ENCODE measurements at regions of chr12 and their contacts with region 1.

Region 1: GRCh38 chr12:70242695-70243509 is at the start of gene CNOT2:
- DNase-seq: peak; percentile 70 to 94
- H3K4me3 ChIP-seq: peak within 1 kb of the TSS; percentile 89 to 92
- H3K27ac ChIP-seq: peak within 1 kb of the TSS; percentile 97 to 98
- H3K4me1 ChIP-seq: peaks cover 5 to 29% of the 10 kb centered on the region in 2 donors
- H3K27me3 ChIP-seq: no peaks in the 10 kb centered on the region
- CTCF ChIP-seq: no peak
- total RNA-seq, gene CNOT2: 71.7 TPM

Region 2: GRCh38 chr12:69359531-69360347 is 883.2 kb before region 1 on chr12 and contains the start of gene YEATS4:
- intact Hi-C with region 1: loop called (anchors 5 kb)
- DNase-seq: peak; percentile 55 to 90
- H3K4me3 ChIP-seq: peak within 1 kb of the TSS; percentile 65 to 88
- H3K27ac ChIP-seq: peak within 1 kb of the TSS; percentile 95 to 97
- H3K4me1 ChIP-seq: no peaks in the 10 kb centered on the region
- H3K27me3 ChIP-seq: no peaks in the 10 kb centered on the region
- CTCF ChIP-seq: no peak
- total RNA-seq, gene YEATS4: 4.3 TPM

Region 3: GRCh38 chr12:69994724-69995173 is 248.2 kb before region 1 on chr12:
- intact Hi-C with region 1: loop called (anchors 5 kb)
- DNase-seq: no peak
- H3K4me3 ChIP-seq: no peak overlapping the region
- H3K27ac ChIP-seq: no peak overlapping the region
- H3K4me1 ChIP-seq: peaks cover 0 to 5% of the 10 kb centered on the region in 2 donors
- H3K27me3 ChIP-seq: no peaks in the 10 kb centered on the region
- CTCF ChIP-seq: no peak

Region 4: DNA sequence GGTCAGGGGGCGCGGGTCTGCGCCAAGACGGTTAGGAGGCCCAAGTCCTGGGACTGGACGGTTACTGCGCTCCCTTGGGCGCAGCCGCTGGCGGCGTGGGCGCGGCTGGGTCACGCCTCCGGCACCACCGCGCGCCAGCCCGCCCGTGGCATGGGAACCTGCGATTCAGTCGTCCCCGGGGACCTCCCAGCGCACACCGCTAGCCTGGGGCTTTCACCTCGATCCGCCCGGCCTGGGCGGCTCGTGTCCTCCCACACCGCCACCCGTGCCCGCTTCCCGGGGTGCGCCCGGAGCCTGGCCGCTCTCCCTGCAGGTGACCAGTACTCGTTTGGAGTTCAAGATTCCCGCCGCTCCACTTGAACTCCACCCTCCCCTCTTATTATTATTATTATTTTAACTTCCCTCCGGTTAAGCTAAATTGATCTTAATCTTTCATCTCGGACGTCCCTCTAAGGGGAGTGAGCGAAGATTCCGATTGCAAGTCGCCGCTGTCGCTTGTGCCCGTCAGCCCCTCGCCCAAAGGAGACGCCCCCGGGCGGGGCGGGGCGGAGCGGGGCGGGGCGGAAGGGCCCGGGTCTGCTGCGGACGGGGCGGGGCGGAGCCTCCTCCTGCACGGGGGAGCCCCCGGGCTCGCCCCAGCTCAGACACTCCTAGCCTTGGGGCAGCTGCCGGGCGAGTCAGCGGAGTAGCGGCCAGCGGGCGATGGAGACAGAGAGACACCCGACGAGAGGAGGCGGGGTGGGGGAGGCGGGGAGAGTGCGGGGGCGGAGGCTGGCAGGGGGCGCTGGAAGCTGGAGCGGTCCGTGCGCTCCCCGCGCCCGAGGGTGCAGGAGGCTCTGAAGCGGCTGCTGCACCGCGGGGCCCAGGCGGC is 123.0 kb after region 1 on chr12 and contains the start of gene KCNMB4:
- intact Hi-C with region 1: loop called (anchors 5 kb)
- DNase-seq: peak in 1 of 2 donors; percentile 75
- H3K4me3 ChIP-seq: peak within 1 kb of the TSS; percentile 76 to 91
- H3K27ac ChIP-seq: peak within 1 kb of the TSS; percentile 27 to 33
- H3K4me1 ChIP-seq: peaks cover 3 to 6% of the 10 kb centered on the region in 2 donors
- H3K27me3 ChIP-seq: no peaks in the 10 kb centered on the region
- CTCF ChIP-seq: no peak
- total RNA-seq, gene KCNMB4: 3.4 TPM

Region 5: DNA sequence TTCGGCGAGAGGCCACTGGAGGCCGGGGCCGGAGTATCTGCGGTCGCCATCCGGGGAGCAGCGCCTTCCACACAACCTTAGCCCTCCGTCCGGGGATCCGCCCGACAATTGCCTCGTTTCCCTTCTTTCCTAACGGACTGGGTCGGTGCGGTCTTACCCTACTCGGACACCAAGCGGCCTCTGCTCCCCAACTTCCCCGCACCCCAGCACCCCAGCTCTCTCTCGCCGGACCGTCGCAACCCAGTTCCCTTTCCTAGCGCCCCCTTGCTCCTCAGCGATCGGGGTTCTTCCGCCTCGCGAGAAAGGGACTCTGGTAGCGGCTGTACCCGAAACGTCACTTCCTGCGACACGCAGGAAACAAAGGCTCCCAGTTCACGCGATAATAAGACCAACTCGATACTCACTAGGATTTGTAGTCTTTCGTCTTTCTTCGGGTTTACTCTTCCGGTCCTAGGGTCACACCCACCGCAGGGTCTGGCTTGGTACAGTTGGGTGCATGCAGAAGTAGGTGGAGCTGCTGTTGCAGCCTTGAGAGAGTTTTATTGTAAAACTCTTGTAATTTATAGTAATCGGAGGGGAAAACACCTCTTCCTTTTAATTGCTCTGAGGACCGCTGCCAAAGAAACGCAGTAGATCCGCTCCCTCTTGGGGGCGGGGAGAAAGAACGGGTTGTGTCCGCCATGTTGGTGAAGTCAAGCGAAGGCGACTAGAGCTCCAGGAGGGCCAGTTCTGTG is 1420.8 kb after region 1 on chr12 and contains the start of gene ZFC3H1:
- intact Hi-C with region 1: loop called (anchors 5 kb)
- DNase-seq: peak; percentile 92 to 97
- H3K4me3 ChIP-seq: peak within 1 kb of the TSS; percentile 91 to 95
- H3K27ac ChIP-seq: peak within 1 kb of the TSS; percentile 96 to 98
- H3K4me1 ChIP-seq: peaks cover 0 to 17% of the 10 kb centered on the region in 2 donors
- H3K27me3 ChIP-seq: no peaks in the 10 kb centered on the region
- CTCF ChIP-seq: peak in 2 of 3 experiments; percentile 24 to 32
- total RNA-seq, gene ZFC3H1: 15.8 TPM

Region 6: GRCh38 chr12:71840231-71840847 is 1597.4 kb after region 1 on chr12:
- intact Hi-C with region 1: loop called (anchors 5 kb)
- DNase-seq: no peak
- H3K4me3 ChIP-seq: peak overlapping the region; percentile 73 to 78
- H3K27ac ChIP-seq: peak overlapping the region; percentile 93 to 96
- H3K4me1 ChIP-seq: peaks cover 0 to 7% of the 10 kb centered on the region in 2 donors
- H3K27me3 ChIP-seq: no peaks in the 10 kb centered on the region
- CTCF ChIP-seq: no peak